HepG2 (cell line): ENCODE measurements at regions of chr13 and their contacts with region 1.

Region 1: DNA sequence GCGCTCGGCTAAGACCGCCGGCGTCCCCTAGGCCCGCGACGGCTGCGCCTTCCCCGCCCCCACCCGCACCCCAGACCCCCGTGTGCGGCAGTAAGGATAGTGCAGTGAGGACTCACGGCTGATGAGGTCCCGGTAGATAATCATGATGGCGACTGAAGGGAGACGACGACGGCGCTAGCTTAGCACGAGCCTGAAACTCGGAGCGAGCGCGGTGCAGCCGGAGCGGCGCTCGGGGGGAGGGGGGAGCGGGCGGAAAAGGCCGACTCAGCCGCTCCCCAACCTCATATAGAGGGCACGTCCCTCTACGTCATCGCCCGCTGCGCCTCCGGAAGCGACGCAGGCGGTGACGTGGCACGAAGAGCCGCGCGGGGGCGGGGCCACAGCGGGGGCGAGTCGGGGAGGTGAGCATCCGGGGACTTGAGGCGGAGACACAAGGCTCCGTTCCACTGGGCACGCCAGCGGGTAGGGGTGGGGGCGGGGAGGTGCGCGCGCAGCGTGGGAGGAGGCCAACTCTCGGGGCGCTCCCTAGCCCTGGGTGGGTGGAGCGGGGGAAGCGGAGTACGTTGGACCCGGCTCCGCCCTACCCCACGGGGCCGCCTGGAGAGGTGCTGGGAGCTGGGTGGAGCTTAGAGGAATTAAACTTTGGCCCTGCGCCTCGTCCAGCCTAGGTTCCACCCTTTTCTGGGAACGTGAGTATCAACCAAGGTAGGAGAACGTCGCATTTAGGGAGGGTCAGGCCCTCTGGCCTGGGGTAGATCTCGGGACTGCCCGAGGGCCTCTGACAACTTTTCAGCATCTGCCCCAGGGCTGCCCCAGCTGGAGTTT is at the start of gene TPT1:
- DNase-seq: peak; percentile 96
- ATAC-seq: peak; percentile 96
- H3K4me3 ChIP-seq: peak within 1 kb of the TSS; percentile 97 to 99 (median 97)
- H3K27ac ChIP-seq: peak within 1 kb of the TSS; percentile 98
- H3K4me1 ChIP-seq: peaks cover 50% of the 10 kb centered on the region
- H3K27me3 ChIP-seq: no peaks in the 10 kb centered on the region; a peak in 1 of 5 replicates
- CTCF ChIP-seq: peak; percentile 17; the same call in 1 of the 2 replicates
- EP300 ChIP-seq: peak; percentile 17 to 53; a peak in 3 of 4 replicates
- POLR2A ChIP-seq: peak; percentile 85 to 91
- RAD21 ChIP-seq: 0 out of 2 replicates have a peak, but pooled peaks have one; percentile 6
- total RNA-seq, gene TPT1: 2,953 and 3,643 TPM in 2 replicates

Region 2: GRCh38 chr13:45132369-45133064 is 208.6 kb before region 1 on chr13:
- CTCF ChIA-PET with region 1: no interaction called
- POLR2A ChIA-PET with region 1: no interaction called
- in situ Hi-C with region 1: no loop called
- intact Hi-C with region 1: no loop called
- DNase-seq: no peak
- ATAC-seq: no peak
- H3K4me3 ChIP-seq: no peak overlapping the region
- H3K27ac ChIP-seq: no peak overlapping the region
- H3K4me1 ChIP-seq: no peaks in the 10 kb centered on the region
- H3K27me3 ChIP-seq: no peaks in the 10 kb centered on the region
- CTCF ChIP-seq: no peak
- EP300 ChIP-seq: no peak
- POLR2A ChIP-seq: no peak
- RAD21 ChIP-seq: no peak

Region 3: DNA sequence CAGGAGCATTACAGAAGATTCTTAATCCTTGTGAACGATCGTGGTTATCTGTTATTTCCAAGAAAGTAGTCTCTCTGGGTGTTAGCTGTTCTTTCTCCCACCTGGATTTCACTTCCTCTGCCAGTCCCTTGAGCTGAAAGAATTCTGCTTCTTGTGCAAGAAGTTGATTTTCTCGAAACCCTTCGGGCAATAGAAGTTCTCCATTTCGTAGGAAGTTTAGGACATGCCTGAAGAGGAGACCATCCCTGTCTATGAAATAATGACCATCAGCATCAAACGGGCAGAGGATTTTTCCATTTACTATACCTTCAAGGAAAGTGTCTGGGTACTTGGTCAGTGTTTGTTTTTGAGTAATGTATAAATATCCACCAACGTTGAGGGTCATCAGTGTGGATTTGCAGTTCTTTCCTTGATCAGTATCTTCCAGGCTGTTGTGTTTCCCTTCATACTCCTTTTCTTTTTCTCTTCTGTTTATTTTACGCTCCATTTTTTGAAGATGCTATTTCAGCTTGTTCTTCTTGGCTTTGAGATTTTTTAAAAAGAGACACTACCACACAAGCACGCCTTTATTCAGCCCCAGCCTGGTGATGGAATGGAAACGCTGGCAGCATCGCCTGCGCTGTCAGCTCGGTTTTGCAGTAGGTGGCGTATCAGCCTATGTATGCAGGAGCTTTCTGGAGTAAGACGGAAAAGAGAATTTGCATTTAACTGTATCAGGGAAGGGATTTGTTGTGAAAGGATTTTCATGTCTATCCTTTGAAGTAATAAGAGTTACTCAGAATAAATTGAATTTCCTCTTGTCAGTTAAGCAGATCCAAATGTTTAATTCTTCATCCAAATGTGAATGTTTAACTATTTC is 146.8 kb before region 1 on chr13:
- CTCF ChIA-PET with region 1: no interaction called
- POLR2A ChIA-PET with region 1: no interaction called
- in situ Hi-C with region 1: no loop called
- intact Hi-C with region 1: no loop called
- DNase-seq: no peak
- ATAC-seq: no peak
- H3K4me3 ChIP-seq: no peak overlapping the region
- H3K27ac ChIP-seq: no peak overlapping the region
- H3K4me1 ChIP-seq: no peaks in the 10 kb centered on the region
- H3K27me3 ChIP-seq: no peaks in the 10 kb centered on the region
- CTCF ChIP-seq: 0 out of 2 replicates have a peak, but pooled peaks have one; percentile 12
- EP300 ChIP-seq: no peak
- POLR2A ChIP-seq: no peak
- RAD21 ChIP-seq: no peak

Region 4: GRCh38 chr13:45316338-45316737 is 24.8 kb before region 1 on chr13:
- CTCF ChIA-PET with region 1: no interaction called
- POLR2A ChIA-PET with region 1: interaction called, 19 read pairs
- in situ Hi-C with region 1: no loop called
- intact Hi-C with region 1: no loop called
- DNase-seq: no peak
- ATAC-seq: peak; percentile 77
- H3K4me3 ChIP-seq: peak overlapping the region; percentile 49 to 73 (median 71)
- H3K27ac ChIP-seq: peak overlapping the region; percentile 62
- H3K4me1 ChIP-seq: peaks cover 33% of the 10 kb centered on the region
- H3K27me3 ChIP-seq: no peaks in the 10 kb centered on the region; a peak in 1 of 5 replicates
- CTCF ChIP-seq: no peak
- EP300 ChIP-seq: no peak
- POLR2A ChIP-seq: peak in 1 of 2 experiments; percentile 52; a peak in 2 of 4 replicates
- RAD21 ChIP-seq: no peak

Region 5: DNA sequence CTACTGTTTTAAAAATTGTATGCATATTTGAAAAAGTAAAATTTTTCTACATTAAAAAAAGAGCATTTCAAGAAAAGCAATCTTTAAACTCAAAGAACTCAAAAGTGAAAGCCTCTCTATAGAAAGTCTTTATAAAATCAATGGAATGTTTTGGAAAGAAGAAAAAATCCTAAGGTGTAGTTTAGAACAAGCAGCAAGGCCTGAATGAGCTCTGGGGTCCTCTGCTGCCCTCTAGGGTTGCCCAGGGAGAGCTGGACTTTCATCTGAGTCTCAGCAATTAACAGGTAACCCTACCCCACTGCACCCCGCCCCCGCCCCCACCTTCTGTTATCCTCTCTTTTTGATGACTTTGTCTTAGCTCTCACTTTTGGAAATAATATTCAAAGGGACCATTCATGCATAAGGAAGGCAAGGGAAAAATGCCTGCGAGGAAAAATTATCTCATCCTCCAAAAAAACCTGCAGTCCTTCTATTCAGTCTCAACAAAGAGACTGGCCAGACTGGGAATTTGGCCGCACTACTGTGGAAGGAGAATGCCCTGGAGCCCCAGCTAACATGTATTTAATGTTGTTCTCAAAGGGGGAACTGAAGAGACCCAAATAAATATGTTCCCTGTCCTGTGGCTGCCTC is 52.9 kb after region 1 on chr13:
- CTCF ChIA-PET with region 1: no interaction called
- POLR2A ChIA-PET with region 1: interaction called, 10 read pairs
- in situ Hi-C with region 1: no loop called
- intact Hi-C with region 1: no loop called
- DNase-seq: peak; percentile 61
- ATAC-seq: peak; percentile 90
- H3K4me3 ChIP-seq: no peak overlapping the region
- H3K27ac ChIP-seq: peak overlapping the region; percentile 20
- H3K4me1 ChIP-seq: peaks cover 5% of the 10 kb centered on the region; the same call in 1 of the 2 replicates
- H3K27me3 ChIP-seq: no peaks in the 10 kb centered on the region
- CTCF ChIP-seq: peak; percentile 66
- EP300 ChIP-seq: no peak
- POLR2A ChIP-seq: no peak
- RAD21 ChIP-seq: no peak

Region 6: GRCh38 chr13:45434556-45435371 is 93.6 kb after region 1 on chr13:
- CTCF ChIA-PET with region 1: no interaction called
- POLR2A ChIA-PET with region 1: interaction called, 29 read pairs
- in situ Hi-C with region 1: no loop called
- intact Hi-C with region 1: no loop called
- DNase-seq: peak; percentile 89
- ATAC-seq: peak; percentile 71
- H3K4me3 ChIP-seq: peak overlapping the region; percentile 17 to 41 (median 20); a peak in 4 of 6 replicates
- H3K27ac ChIP-seq: peak overlapping the region; percentile 64
- H3K4me1 ChIP-seq: peaks cover 69% of the 10 kb centered on the region
- H3K27me3 ChIP-seq: no peaks in the 10 kb centered on the region
- CTCF ChIP-seq: no peak
- EP300 ChIP-seq: peak in 1 of 2 experiments; percentile 72; a peak in 2 of 4 replicates
- POLR2A ChIP-seq: peak; percentile 54 to 80; a peak in 3 of 4 replicates
- RAD21 ChIP-seq: no peak

Region 7: DNA sequence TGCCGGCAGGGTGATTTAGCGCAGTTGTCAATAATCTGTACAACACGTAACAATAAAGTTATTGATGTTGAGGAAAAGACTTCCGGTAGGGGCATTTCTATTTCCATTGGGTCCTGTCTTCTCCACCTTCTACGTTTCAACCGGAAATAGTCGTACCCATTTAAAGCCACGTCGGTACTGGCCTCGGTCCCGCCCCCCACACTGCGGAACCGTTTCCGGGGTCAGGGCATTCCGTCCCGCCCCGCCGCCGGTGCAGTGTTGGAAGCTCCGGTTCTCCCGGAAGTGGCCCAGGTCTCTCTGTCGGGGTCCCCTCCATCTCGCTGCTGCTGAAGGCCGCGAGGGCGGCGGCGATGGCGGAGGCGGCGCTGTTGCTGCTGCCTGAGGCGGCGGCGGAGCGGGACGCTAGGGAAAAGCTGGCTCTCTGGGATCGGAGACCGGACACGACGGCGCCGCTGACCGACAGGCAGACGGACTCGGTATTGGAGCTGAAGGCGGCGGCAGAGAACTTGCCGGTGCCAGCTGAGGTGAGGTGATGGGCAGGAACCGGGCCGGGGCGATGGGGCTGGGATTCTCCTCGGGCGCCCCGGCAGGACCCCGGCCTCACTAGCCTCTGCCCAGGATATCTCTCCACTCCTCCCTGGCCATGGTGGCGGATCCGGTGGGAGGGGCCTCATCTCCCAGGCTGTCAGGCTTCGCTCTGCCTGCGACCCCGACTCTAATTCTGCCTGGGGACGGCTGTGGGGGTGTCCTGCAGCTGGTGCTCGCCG is 123.7 kb after region 1 on chr13 and contains the start of gene COG3:
- CTCF ChIA-PET with region 1: no interaction called
- POLR2A ChIA-PET with region 1: interaction called, 14 read pairs
- in situ Hi-C with region 1: no loop called
- intact Hi-C with region 1: no loop called
- DNase-seq: peak; percentile 99
- ATAC-seq: peak; percentile 95
- H3K4me3 ChIP-seq: peak within 1 kb of the TSS; percentile 76 to 96 (median 91)
- H3K27ac ChIP-seq: peak within 1 kb of the TSS; percentile 89
- H3K4me1 ChIP-seq: peaks cover 42% of the 10 kb centered on the region
- H3K27me3 ChIP-seq: no peaks in the 10 kb centered on the region; a peak in 1 of 5 replicates
- CTCF ChIP-seq: peak; percentile 47; the same call in 1 of the 2 replicates
- EP300 ChIP-seq: peak; percentile 20 to 34; a peak in 1 of 4 replicates
- POLR2A ChIP-seq: peak; percentile 71 to 75
- RAD21 ChIP-seq: no peak; the same call in 1 of the 2 replicates
- total RNA-seq, gene COG3: 47.5 and 47.8 TPM in 2 replicates

Region 8: GRCh38 chr13:45602183-45603170 is 261.3 kb after region 1 on chr13:
- CTCF ChIA-PET with region 1: no interaction called
- POLR2A ChIA-PET with region 1: no interaction called
- in situ Hi-C with region 1: no loop called
- intact Hi-C with region 1: no loop called
- DNase-seq: no peak
- ATAC-seq: no peak
- H3K4me3 ChIP-seq: no peak overlapping the region
- H3K27ac ChIP-seq: no peak overlapping the region
- H3K4me1 ChIP-seq: no peaks in the 10 kb centered on the region
- H3K27me3 ChIP-seq: no peaks in the 10 kb centered on the region
- CTCF ChIP-seq: no peak
- EP300 ChIP-seq: no peak
- POLR2A ChIP-seq: no peak
- RAD21 ChIP-seq: no peak

Region 9: GRCh38 chr13:46288570-46289259 is 947.6 kb after region 1 on chr13:
- CTCF ChIA-PET with region 1: no interaction called
- POLR2A ChIA-PET with region 1: no interaction called
- in situ Hi-C with region 1: no loop called
- intact Hi-C with region 1: no loop called
- DNase-seq: peak; percentile 27
- ATAC-seq: peak; percentile 81
- H3K4me3 ChIP-seq: no peak overlapping the region
- H3K27ac ChIP-seq: no peak overlapping the region
- H3K4me1 ChIP-seq: no peaks in the 10 kb centered on the region
- H3K27me3 ChIP-seq: 0 out of 5 replicates have a peak, but pooled peaks cover 0 to 2% of the 10 kb centered on the region in 2 experiments
- CTCF ChIP-seq: peak; percentile 55
- EP300 ChIP-seq: no peak
- POLR2A ChIP-seq: no peak
- RAD21 ChIP-seq: no peak